ENCODE measurements at regions of chr17 and their contacts with region 1.

Region 1: DNA sequence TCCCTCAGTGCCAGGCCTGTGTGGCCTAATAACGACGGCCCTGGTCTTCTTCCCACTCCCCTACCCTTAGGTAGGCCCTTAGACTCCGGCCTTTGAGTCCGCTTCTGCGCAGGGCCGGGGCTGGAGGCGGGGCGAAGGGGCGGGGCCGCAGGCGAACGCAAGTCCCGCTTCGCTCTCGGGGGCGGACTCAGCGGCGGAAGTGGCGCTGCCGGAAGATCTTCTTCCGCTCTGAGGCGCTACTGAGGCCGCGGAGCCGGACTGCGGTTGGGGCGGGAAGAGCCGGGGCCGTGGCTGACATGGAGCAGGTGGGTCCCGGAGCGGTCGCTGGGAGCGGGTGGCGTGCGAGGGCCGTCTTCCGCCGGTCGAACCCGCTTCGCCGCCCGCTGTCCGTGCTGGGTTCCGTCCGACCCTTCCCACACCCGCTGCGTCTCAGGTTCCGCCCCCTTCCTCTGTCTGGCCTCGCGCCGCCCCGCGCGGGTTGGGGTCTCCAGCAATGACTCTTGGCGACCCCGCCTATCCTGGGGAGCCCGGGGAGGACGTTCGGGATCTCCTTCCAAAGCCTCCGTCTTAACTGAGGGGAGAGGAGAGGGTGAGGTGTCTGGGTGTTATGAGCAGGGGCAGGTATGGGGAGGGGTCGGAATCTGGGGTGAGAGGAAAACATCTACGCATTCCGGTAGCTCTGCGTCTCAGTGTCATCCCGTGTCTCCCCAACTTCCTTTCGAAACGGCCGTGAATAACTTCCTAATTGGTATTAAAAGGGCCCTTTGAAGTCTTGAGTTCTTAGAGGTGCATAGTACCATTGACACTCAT is at the start of gene STARD3:
- DNase-seq: peak; percentile 93
- ATAC-seq: peak; percentile 92
- H3K4me3 ChIP-seq: peak within 1 kb of the TSS; percentile 76 to 94 (median 82)
- H3K4me3 Mint-ChIP-seq: peak within 1 kb of the TSS; percentile 95
- H3K27ac ChIP-seq: peak within 1 kb of the TSS; percentile 89 to 90
- H3K27ac Mint-ChIP-seq: peak within 1 kb of the TSS; percentile 91
- H3K4me1 ChIP-seq: peaks cover 49 to 63% of the 10 kb centered on the region in 2 donors
- H3K4me1 Mint-ChIP-seq: peaks cover 60% of the 10 kb centered on the region
- H3K27me3 ChIP-seq: peaks cover 0 to 3% (median 0%) of the 10 kb centered on the region in 4 experiments
- H3K27me3 Mint-ChIP-seq: no peaks in the 10 kb centered on the region
- CTCF ChIP-seq: no peak
- total RNA-seq, gene STARD3: 93.1 and 101 TPM in 2 replicates

Region 2: DNA sequence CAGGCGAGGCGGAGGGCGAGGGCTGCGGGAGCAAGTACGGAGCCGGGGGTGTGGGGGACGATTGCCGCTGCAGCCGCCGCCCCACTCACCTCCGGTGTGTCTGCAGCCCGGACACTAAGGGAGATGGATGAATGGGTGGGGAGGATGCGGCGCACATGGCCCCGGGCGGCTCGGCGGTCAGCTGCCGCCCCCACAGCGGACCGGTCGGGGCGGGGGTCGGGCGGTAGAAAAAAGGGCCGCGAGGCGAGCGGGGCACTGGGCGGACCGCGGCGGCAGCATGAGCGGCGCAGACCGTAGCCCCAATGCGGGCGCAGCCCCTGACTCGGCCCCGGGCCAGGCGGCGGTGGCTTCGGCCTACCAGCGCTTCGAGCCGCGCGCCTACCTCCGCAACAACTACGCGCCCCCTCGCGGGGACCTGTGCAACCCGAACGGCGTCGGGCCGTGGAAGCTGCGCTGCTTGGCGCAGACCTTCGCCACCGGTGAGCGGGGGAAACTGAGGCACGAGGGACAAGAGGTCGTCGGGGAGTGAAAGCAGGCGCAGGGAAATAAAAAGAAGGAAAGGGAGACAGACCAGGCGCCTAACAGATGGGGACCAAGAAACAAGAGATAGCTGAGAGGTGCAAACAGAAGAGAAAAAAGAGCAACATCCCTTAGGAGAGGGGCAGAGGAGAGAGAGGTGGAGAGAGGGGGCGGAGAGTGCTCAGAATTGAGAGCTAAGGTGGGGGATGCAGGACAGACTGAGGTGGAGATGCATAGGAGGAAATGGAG is 31.3 kb after region 1 on chr17 and contains the start of gene PNMT:
- CTCF ChIA-PET with region 1: interaction called, 11 read pairs
- POLR2A ChIA-PET with region 1: no interaction called
- intact Hi-C with region 1: no loop called
- DNase-seq: peak; percentile 82
- ATAC-seq: peak; percentile 76
- H3K4me3 ChIP-seq: peak within 1 kb of the TSS in 4 of 5 experiments; percentile 28 to 62 (median 53)
- H3K4me3 Mint-ChIP-seq: peak within 1 kb of the TSS; percentile 75
- H3K27ac ChIP-seq: no peak within 1 kb of the TSS
- H3K27ac Mint-ChIP-seq: peak within 1 kb of the TSS; percentile 7
- H3K4me1 ChIP-seq: peaks cover 24 to 36% of the 10 kb centered on the region in 2 donors
- H3K4me1 Mint-ChIP-seq: peaks cover 27% of the 10 kb centered on the region
- H3K27me3 ChIP-seq: peaks cover 0 to 37% (median 7%) of the 10 kb centered on the region in 4 experiments
- H3K27me3 Mint-ChIP-seq: peaks cover 23% of the 10 kb centered on the region
- CTCF ChIP-seq: peak; percentile 79
- total RNA-seq, gene PNMT: 0.39 and 0.76 TPM in 2 replicates

Measured in B cell (primary cell).